ENCODE measurements at regions of chr20 and their contacts with region 1.

Region 1: GRCh38 chr20:309841-310644 is 12.7 kb downstream of the ZCCHC3 start:
- DNase-seq: peak; percentile 91
- ATAC-seq: peak; percentile 100
- H3K4me3 Mint-ChIP-seq: peak overlapping the region; percentile 56
- H3K27ac Mint-ChIP-seq: no peak overlapping the region
- H3K4me1 Mint-ChIP-seq: peaks cover 11% of the 10 kb centered on the region
- H3K27me3 Mint-ChIP-seq: no peaks in the 10 kb centered on the region

Region 2: GRCh38 chr20:290084-290831 is 19.8 kb before region 1 on chr20 and contains the start of gene C20orf96:
- CTCF ChIA-PET with region 1: no interaction called
- POLR2A ChIA-PET with region 1: no interaction called
- intact Hi-C with region 1: loop called in 1 of 2 experiments (anchors 1 kb)
- DNase-seq: peak; percentile 94
- ATAC-seq: peak; percentile 94
- H3K4me3 Mint-ChIP-seq: no peak within 1 kb of the TSS
- H3K27ac Mint-ChIP-seq: peak within 1 kb of the TSS; percentile 85
- H3K4me1 Mint-ChIP-seq: peaks cover 15% of the 10 kb centered on the region
- H3K27me3 Mint-ChIP-seq: no peaks in the 10 kb centered on the region
- total RNA-seq, gene C20orf96: 7.0 to 8.1 TPM

Region 3: GRCh38 chr20:297098-297924 is 12.7 kb before region 1 on chr20 and contains the start of gene ZCCHC3:
- CTCF ChIA-PET with region 1: interaction called, 4 read pairs
- POLR2A ChIA-PET with region 1: no interaction called
- intact Hi-C with region 1: loop called in 1 of 2 experiments (anchors 1 kb)
- DNase-seq: peak; percentile 92
- ATAC-seq: peak; percentile 81
- H3K4me3 Mint-ChIP-seq: peak within 1 kb of the TSS; percentile 100
- H3K27ac Mint-ChIP-seq: peak within 1 kb of the TSS; percentile 99
- H3K4me1 Mint-ChIP-seq: peaks cover 44% of the 10 kb centered on the region
- H3K27me3 Mint-ChIP-seq: no peaks in the 10 kb centered on the region
- total RNA-seq, gene ZCCHC3: 15.6 to 16.4 TPM

Region 4: GRCh38 chr20:719816-720215 is 409.8 kb after region 1 on chr20:
- CTCF ChIA-PET with region 1: no interaction called
- POLR2A ChIA-PET with region 1: no interaction called
- intact Hi-C with region 1: no loop called
- DNase-seq: no peak
- ATAC-seq: no peak
- H3K4me3 Mint-ChIP-seq: no peak overlapping the region
- H3K27ac Mint-ChIP-seq: no peak overlapping the region
- H3K4me1 Mint-ChIP-seq: no peaks in the 10 kb centered on the region
- H3K27me3 Mint-ChIP-seq: peaks cover 17% of the 10 kb centered on the region